ENCODE measurements at regions of chr17 and their contacts with region 1.

Region 1: DNA sequence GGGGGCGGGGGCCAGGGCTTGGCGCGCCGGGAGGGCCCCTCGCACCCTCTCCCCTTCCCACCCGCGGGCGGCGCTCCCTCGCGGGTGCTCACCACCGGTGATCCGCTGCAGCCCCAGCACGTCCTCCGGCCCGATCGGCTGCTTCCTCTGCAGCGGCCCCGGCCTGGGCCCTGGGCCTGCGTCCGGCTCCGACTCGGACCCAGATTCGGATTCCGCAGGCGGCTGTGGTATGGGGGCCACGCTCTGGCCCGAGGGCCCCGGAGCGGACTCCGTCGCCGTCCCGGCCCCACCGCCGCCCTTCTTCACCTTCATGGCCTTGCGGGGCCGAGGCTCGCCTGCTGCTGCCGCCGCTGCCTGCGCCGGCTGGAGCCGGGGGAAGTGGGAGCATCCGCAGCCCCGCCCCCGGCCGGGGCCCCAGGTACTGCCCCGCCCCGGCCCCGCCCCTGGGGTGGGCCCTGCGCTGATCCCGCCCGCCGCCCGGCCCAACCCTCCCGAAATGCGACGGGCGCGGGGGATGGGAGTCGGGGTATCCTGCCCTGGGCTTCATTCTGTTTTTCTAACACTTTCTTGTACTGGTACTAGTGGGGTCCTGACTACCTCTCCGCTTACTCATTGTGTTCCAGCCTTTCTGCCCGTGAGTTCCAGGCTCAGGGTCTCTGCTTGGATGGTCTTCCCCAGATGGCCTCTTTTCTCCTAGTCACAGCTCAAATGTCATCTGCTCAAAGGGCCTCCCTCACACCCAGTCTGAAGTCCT is at the start of gene UNC119:
- DNase-seq: peak; percentile 59 to 87 (median 76)
- ATAC-seq: peak; percentile 84
- H3K4me3 ChIP-seq: peak within 1 kb of the TSS; percentile 54
- H3K4me3 Mint-ChIP-seq: peak within 1 kb of the TSS; percentile 85 to 100 (median 92)
- H3K27ac ChIP-seq: peak within 1 kb of the TSS; percentile 89
- H3K27ac Mint-ChIP-seq: peak within 1 kb of the TSS; percentile 91 to 98 (median 95)
- H3K4me1 ChIP-seq: peaks cover 35 to 44% of the 10 kb centered on the region in 2 donors
- H3K4me1 Mint-ChIP-seq: peaks cover 42 to 62% (median 54%) of the 10 kb centered on the region in 7 donors
- H3K27me3 ChIP-seq: no peaks in the 10 kb centered on the region
- H3K27me3 Mint-ChIP-seq: no peaks in the 10 kb centered on the region
- total RNA-seq, gene UNC119: 40.6 to 108 (median 90.2) TPM

Region 2: DNA sequence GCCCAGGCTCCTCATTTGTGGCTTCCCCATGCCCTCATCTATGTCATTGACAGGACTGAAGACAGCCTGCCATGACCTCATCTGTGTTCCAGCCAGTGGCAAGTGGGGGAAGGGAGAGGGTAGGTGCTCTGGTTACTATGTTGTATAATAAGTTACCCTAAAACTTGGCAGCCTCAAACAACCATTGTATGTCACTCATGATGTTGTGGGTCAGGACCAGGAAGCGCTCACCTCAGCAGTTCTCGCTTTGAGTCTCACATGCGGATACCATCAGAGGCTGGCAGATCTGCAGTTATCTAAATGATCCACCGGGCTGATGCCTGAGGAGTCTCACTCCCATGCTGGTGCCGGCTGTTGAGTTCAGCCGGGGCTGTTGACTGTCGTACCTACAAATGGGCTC is 322.4 kb before region 1 on chr17:
- CTCF ChIA-PET with region 1: no interaction called
- POLR2A ChIA-PET with region 1: no interaction called
- intact Hi-C with region 1: loop called in 1 of 2 experiments (anchors 10 kb)
- DNase-seq: no peak
- ATAC-seq: peak; percentile 29
- H3K4me3 ChIP-seq: no peak overlapping the region
- H3K4me3 Mint-ChIP-seq: no peak overlapping the region
- H3K27ac ChIP-seq: no peak overlapping the region
- H3K27ac Mint-ChIP-seq: no peak overlapping the region
- H3K4me1 ChIP-seq: no peaks in the 10 kb centered on the region
- H3K4me1 Mint-ChIP-seq: peaks cover 8 to 15% (median 12%) of the 10 kb centered on the region in 7 donors
- H3K27me3 ChIP-seq: peaks cover 0 to 3% of the 10 kb centered on the region in 2 donors
- H3K27me3 Mint-ChIP-seq: peaks cover 43 to 66% (median 50%) of the 10 kb centered on the region in 5 donors

Region 3: GRCh38 chr17:28494445-28495188 is 57.8 kb before region 1 on chr17:
- CTCF ChIA-PET with region 1: interaction called, 3 read pairs
- POLR2A ChIA-PET with region 1: interaction called, 3 read pairs
- intact Hi-C with region 1: loop called (anchors 1 to 2 kb)
- DNase-seq: peak; percentile 56 to 85 (median 73)
- ATAC-seq: peak; percentile 90
- H3K4me3 ChIP-seq: no peak overlapping the region
- H3K4me3 Mint-ChIP-seq: no peak overlapping the region
- H3K27ac ChIP-seq: no peak overlapping the region
- H3K27ac Mint-ChIP-seq: no peak overlapping the region
- H3K4me1 ChIP-seq: no peaks in the 10 kb centered on the region
- H3K4me1 Mint-ChIP-seq: peaks cover 0 to 2% (median 0%) of the 10 kb centered on the region in 7 donors
- H3K27me3 ChIP-seq: no peaks in the 10 kb centered on the region
- H3K27me3 Mint-ChIP-seq: no peaks in the 10 kb centered on the region

Region 4: DNA sequence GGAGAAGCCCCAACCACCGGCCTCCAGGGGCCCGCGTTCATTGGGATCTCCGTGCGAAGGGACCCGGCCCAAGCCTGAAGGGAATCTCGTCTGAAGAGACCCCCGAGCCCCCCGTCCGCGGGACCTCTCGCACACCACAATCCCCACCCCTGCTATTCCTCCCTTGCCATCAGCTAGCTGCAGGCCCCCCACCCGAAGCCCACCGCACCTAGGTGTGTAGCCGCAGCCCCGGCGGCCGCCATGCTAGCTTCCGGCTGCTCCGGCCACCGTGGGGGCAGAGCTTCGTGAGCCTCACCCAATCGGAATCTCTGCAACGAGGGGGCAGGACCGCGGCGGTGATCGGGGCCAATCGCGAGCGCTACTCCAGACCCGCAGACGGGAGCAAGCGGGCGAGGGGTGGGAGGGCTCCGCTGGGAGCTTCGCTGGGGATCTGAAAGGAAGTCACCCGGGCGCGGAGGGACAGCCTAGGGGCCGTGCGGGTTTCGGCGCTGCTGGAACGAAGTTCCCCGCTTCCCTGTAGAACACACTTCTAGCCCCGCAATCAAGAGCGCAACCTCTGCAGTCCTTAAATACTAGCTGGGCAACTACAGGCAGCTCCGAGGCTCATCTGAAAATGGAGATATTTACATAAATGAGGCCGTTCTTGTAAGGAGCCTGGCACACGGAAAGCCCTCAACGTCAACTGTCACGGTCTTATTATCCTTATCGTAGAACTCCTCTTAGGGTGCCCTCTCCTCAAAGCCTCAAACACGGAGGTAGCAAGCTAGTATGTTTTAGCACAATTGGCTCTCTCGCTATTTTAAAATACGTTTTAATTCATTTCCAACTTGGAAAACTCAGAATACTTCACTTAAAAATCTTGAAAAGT is 19.1 kb after region 1 on chr17 and contains the start of gene PIGS:
- CTCF ChIA-PET with region 1: interaction called, 6 read pairs
- POLR2A ChIA-PET with region 1: interaction called, 102 read pairs
- intact Hi-C with region 1: loop called (anchors 1 kb)
- DNase-seq: peak; percentile 72 to 93 (median 84)
- ATAC-seq: peak; percentile 99
- H3K4me3 ChIP-seq: peak within 1 kb of the TSS; percentile 78
- H3K4me3 Mint-ChIP-seq: peak within 1 kb of the TSS; percentile 93 to 99 (median 96)
- H3K27ac ChIP-seq: peak within 1 kb of the TSS; percentile 90
- H3K27ac Mint-ChIP-seq: peak within 1 kb of the TSS; percentile 84 to 97 (median 93)
- H3K4me1 ChIP-seq: peaks cover 28 to 31% of the 10 kb centered on the region in 2 donors
- H3K4me1 Mint-ChIP-seq: peaks cover 49 to 76% (median 68%) of the 10 kb centered on the region in 7 donors
- H3K27me3 ChIP-seq: no peaks in the 10 kb centered on the region
- H3K27me3 Mint-ChIP-seq: no peaks in the 10 kb centered on the region
- total RNA-seq, gene PIGS: 58.5 to 71.2 (median 62.4) TPM

Region 5: GRCh38 chr17:28585851-28586250 is 33.4 kb after region 1 on chr17:
- CTCF ChIA-PET with region 1: no interaction called
- POLR2A ChIA-PET with region 1: no interaction called
- intact Hi-C with region 1: no loop called
- DNase-seq: no peak
- ATAC-seq: no peak
- H3K4me3 ChIP-seq: no peak overlapping the region
- H3K4me3 Mint-ChIP-seq: no peak overlapping the region
- H3K27ac ChIP-seq: no peak overlapping the region
- H3K27ac Mint-ChIP-seq: no peak overlapping the region
- H3K4me1 ChIP-seq: no peaks in the 10 kb centered on the region
- H3K4me1 Mint-ChIP-seq: peaks cover 0 to 6% (median 3%) of the 10 kb centered on the region in 7 donors
- H3K27me3 ChIP-seq: no peaks in the 10 kb centered on the region
- H3K27me3 Mint-ChIP-seq: no peaks in the 10 kb centered on the region

Region 6: DNA sequence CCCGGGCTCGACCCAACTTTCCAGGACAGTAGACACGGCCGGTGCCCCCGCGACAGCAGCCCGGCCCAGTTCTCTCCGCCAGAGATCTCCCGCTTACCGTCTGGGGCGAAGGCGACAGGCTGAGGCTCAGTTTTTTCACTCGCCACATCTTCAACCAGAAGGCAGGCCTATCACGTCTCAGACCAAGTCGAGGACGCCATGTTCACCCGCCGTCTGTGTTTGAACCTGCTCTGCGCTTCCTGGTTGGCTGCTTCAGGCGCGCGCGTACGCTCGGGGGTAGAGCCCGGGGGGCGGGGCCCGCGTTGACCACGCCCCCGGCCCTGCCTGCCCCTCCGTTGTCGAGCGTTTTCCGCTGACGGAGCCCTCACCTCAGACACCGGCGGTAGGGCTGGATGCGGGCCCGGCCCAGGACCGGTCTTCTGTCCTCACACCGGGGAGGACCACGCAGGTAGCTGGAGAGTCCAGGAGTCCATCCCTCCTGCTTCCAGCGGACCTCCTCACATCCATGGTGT is 46.4 kb after region 1 on chr17 and contains the start of gene SPAG5:
- CTCF ChIA-PET with region 1: no interaction called
- POLR2A ChIA-PET with region 1: interaction called, 11 read pairs
- intact Hi-C with region 1: loop called (anchors 1 kb)
- DNase-seq: peak; percentile 93 to 97 (median 96)
- ATAC-seq: peak; percentile 98
- H3K4me3 ChIP-seq: peak within 1 kb of the TSS; percentile 93
- H3K4me3 Mint-ChIP-seq: peak within 1 kb of the TSS; percentile 88 to 99 (median 94)
- H3K27ac ChIP-seq: peak within 1 kb of the TSS; percentile 97
- H3K27ac Mint-ChIP-seq: peak within 1 kb of the TSS; percentile 96 to 99 (median 98)
- H3K4me1 ChIP-seq: peaks cover 8 to 10% of the 10 kb centered on the region in 2 donors
- H3K4me1 Mint-ChIP-seq: peaks cover 18 to 25% (median 21%) of the 10 kb centered on the region in 7 donors
- H3K27me3 ChIP-seq: no peaks in the 10 kb centered on the region
- H3K27me3 Mint-ChIP-seq: no peaks in the 10 kb centered on the region
- total RNA-seq, gene SPAG5: 10.4 to 95.3 (median 18.4) TPM

Region 7: GRCh38 chr17:28710861-28711722 is 158.7 kb after region 1 on chr17:
- CTCF ChIA-PET with region 1: no interaction called
- POLR2A ChIA-PET with region 1: no interaction called
- intact Hi-C with region 1: loop called in 1 of 2 experiments (anchors 1 kb)
- DNase-seq: peak; percentile 71 to 97 (median 85)
- ATAC-seq: peak; percentile 95
- H3K4me3 ChIP-seq: peak overlapping the region; percentile 95
- H3K4me3 Mint-ChIP-seq: peak overlapping the region; percentile 76 to 94 (median 92)
- H3K27ac ChIP-seq: peak overlapping the region; percentile 83
- H3K27ac Mint-ChIP-seq: peak overlapping the region; percentile 85 to 98 (median 93)
- H3K4me1 ChIP-seq: peaks cover 9 to 12% of the 10 kb centered on the region in 2 donors
- H3K4me1 Mint-ChIP-seq: peaks cover 12 to 29% (median 19%) of the 10 kb centered on the region in 7 donors
- H3K27me3 ChIP-seq: no peaks in the 10 kb centered on the region
- H3K27me3 Mint-ChIP-seq: peaks cover 0 to 14% (median 6%) of the 10 kb centered on the region in 5 donors

Measured in naive thymus-derived CD4-positive, alpha-beta T cell (primary cell).